Naive thymus-derived CD4-positive, alpha-beta T cell (primary cell): ENCODE measurements at regions of chr9 and their contacts with region 1.

Region 1: GRCh38 chr9:83508067-83508466 is 30.1 kb downstream of the FRMD3 start:
- DNase-seq: peak in 7 of 9 donors; percentile 1 to 53 (median 36)
- ATAC-seq: peak; percentile 78
- H3K4me3 ChIP-seq: no peak overlapping the region
- H3K4me3 Mint-ChIP-seq: no peak overlapping the region
- H3K27ac ChIP-seq: no peak overlapping the region
- H3K27ac Mint-ChIP-seq: peak overlapping the region in 7 of 9 donors; percentile 30 to 56 (median 37)
- H3K4me1 ChIP-seq: no peaks in the 10 kb centered on the region
- H3K4me1 Mint-ChIP-seq: peaks cover 6 to 15% (median 9%) of the 10 kb centered on the region in 7 donors
- H3K27me3 ChIP-seq: no peaks in the 10 kb centered on the region
- H3K27me3 Mint-ChIP-seq: no peaks in the 10 kb centered on the region

Region 2: GRCh38 chr9:83154087-83154736 is 353.9 kb before region 1 on chr9:
- CTCF ChIA-PET with region 1: no interaction called
- POLR2A ChIA-PET with region 1: no interaction called
- intact Hi-C with region 1: no loop called
- DNase-seq: no peak
- ATAC-seq: no peak
- H3K4me3 ChIP-seq: no peak overlapping the region
- H3K4me3 Mint-ChIP-seq: no peak overlapping the region
- H3K27ac ChIP-seq: no peak overlapping the region
- H3K27ac Mint-ChIP-seq: no peak overlapping the region
- H3K4me1 ChIP-seq: no peaks in the 10 kb centered on the region
- H3K4me1 Mint-ChIP-seq: no peaks in the 10 kb centered on the region
- H3K27me3 ChIP-seq: no peaks in the 10 kb centered on the region
- H3K27me3 Mint-ChIP-seq: peaks cover 0 to 12% (median 0%) of the 10 kb centered on the region in 5 donors

Region 3: DNA sequence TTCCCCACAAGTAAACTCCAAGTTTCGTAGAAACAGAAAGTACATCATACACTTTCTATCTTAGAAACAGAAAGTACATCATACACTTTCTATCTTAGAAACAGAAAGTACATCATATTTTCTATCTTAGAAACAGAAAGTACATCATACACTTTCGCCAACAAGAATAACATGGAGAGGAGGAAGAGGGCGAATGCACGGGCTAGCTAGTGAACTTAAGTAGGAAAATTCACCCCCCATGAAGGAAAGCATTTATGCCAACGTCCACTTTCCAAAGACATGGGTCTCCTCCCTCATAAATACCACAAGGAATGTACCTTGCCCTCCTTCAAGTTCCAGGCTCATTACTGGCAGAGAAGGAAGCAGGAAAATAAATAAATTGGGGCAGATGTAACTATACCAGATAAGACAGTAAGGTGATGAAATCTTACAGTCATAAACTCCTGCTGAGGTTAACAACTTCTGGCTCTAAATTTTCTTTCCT is 34.5 kb before region 1 on chr9:
- CTCF ChIA-PET with region 1: no interaction called
- POLR2A ChIA-PET with region 1: no interaction called
- intact Hi-C with region 1: loop called in 1 of 2 experiments (anchors 1 kb)
- DNase-seq: no peak
- ATAC-seq: peak; percentile 68
- H3K4me3 ChIP-seq: no peak overlapping the region
- H3K4me3 Mint-ChIP-seq: peak overlapping the region; percentile 4 to 81 (median 59)
- H3K27ac ChIP-seq: peak overlapping the region; percentile 42
- H3K27ac Mint-ChIP-seq: peak overlapping the region; percentile 7 to 89 (median 69)
- H3K4me1 ChIP-seq: peaks cover 0 to 2% of the 10 kb centered on the region in 2 donors
- H3K4me1 Mint-ChIP-seq: peaks cover 10 to 19% (median 17%) of the 10 kb centered on the region in 7 donors
- H3K27me3 ChIP-seq: no peaks in the 10 kb centered on the region
- H3K27me3 Mint-ChIP-seq: peaks cover 0 to 23% (median 0%) of the 10 kb centered on the region in 5 donors